Panc1 (cell line): ENCODE measurements at regions of chr18 and their contacts with region 1.

Region 1: GRCh38 chr18:12639990-12640880 is 17.7 kb downstream of the SPIRE1 start:
- DNase-seq: peak; percentile 93
- ATAC-seq: peak; percentile 95
- H3K4me3 ChIP-seq: peak overlapping the region in 1 of 2 experiments; percentile 37; a peak in 2 of 4 replicates
- H3K27ac ChIP-seq: peak overlapping the region; percentile 73
- H3K4me1 ChIP-seq: peaks cover 22% of the 10 kb centered on the region
- H3K27me3 ChIP-seq: no peaks in the 10 kb centered on the region
- CTCF ChIP-seq: no peak

Region 2: DNA sequence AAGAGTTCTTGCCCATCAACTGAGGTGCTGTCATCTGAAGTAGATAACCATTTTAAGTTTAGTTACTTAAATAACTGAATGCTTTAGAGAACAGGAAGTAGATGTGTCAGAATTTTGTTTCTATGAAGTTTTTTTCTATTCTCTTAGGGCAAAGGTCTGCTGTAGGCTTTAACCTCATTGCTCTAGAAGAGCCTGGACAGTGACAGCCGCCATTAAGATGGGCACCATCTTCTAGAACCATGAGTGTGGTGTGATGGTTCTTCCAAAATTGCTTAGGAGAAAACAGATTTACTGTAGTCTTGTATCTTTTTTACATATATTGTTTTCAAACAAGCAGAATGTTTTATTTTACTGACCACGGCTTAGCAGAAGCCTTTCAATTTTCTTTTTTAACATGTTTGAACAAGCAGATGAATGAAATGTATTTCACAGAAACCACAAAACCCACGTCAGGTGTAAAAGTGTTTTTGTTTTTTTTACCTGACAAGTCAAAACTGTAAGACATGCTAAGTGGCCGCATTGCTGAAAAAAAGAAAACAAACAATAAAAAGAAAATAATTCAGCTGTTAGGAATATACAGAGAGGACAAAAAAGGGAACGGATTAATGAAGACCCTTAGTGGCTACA is 154.6 kb before region 1 on chr18:
- CTCF ChIA-PET with region 1: no interaction called
- POLR2A ChIA-PET with region 1: no interaction called
- in situ Hi-C with region 1: no loop called
- intact Hi-C with region 1: no loop called
- DNase-seq: no peak
- ATAC-seq: no peak
- H3K4me3 ChIP-seq: no peak overlapping the region
- H3K27ac ChIP-seq: no peak overlapping the region
- H3K4me1 ChIP-seq: no peaks in the 10 kb centered on the region
- H3K27me3 ChIP-seq: no peaks in the 10 kb centered on the region
- CTCF ChIP-seq: no peak

Region 3: DNA sequence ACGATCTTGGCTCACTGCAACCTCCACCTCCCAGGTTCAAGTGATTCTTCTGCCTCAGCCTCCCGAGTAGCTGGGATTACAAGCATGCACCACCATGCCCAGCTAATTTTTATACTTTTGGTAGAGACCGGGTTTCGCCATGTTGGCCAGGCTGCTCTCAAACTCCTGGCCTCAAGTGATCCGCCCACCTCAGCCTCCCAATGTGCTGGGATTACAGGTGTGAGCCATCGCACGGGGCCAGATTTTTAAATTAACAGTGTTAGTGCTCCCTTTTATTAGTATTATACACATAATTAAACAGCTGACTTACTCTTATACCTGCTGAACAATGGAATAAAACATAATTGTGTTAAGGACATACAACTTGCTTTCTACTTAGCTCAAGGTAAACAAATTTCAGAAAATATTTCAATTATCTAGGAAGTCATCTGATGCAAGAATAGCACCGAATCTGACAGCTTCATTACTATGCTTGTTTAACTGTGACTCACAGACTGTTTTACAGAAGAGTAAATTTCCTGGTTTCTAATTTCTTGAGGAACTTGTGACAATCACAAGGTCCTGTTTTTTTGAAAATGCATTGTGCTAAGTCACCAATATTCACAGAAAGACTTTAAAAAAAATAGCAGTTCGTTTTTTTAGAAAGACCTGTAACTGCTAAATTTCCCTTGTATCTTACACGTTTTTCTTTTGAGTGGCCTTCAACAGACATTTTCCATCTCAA is 33.5 kb before region 1 on chr18:
- CTCF ChIA-PET with region 1: no interaction called
- POLR2A ChIA-PET with region 1: interaction called, 15 read pairs
- in situ Hi-C with region 1: no loop called
- intact Hi-C with region 1: no loop called
- DNase-seq: peak; percentile 75
- ATAC-seq: peak; percentile 73
- H3K4me3 ChIP-seq: no peak overlapping the region
- H3K27ac ChIP-seq: peak overlapping the region; percentile 91
- H3K4me1 ChIP-seq: peaks cover 34% of the 10 kb centered on the region
- H3K27me3 ChIP-seq: no peaks in the 10 kb centered on the region
- CTCF ChIP-seq: no peak

Region 4: DNA sequence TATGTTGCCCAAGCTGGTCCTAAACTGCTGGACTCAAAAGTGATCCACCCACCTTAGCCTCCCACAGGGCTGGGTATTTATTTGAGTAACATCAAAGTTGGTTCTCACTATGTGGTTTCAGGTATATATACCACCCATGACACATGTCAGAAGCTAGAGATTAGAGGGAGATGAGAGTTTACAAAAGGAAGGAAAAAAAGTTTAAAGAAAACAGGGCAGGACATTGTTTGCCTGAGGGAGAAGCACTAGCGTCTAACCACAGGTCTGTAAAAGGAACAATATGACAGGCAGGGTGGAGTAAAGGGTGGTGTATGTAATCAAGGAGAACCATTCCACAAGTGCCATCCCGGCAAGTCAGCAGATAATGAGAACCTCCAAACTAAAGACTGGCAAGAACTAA is 53.8 kb after region 1 on chr18:
- CTCF ChIA-PET with region 1: no interaction called
- POLR2A ChIA-PET with region 1: no interaction called
- in situ Hi-C with region 1: no loop called
- intact Hi-C with region 1: no loop called
- DNase-seq: no peak
- ATAC-seq: no peak
- H3K4me3 ChIP-seq: no peak overlapping the region
- H3K27ac ChIP-seq: no peak overlapping the region
- H3K4me1 ChIP-seq: no peaks in the 10 kb centered on the region
- H3K27me3 ChIP-seq: no peaks in the 10 kb centered on the region
- CTCF ChIP-seq: no peak